OCI-LY7 (cell line): ENCODE measurements at regions of chr2 and their contacts with region 1.

Region 1: GRCh38 chr2:203656522-203657287 is 49.7 kb upstream of the CD28 start:
- DNase-seq: peak; percentile 67
- H3K4me3 ChIP-seq: no peak overlapping the region
- H3K27ac ChIP-seq: peak overlapping the region; percentile 18
- H3K4me1 ChIP-seq: peaks cover 72% of the 10 kb centered on the region
- CTCF ChIP-seq: no peak

Region 2: GRCh38 chr2:203683932-203684556 is 27.3 kb after region 1 on chr2:
- CTCF ChIA-PET with region 1: no interaction called
- POLR2A ChIA-PET with region 1: no interaction called
- intact Hi-C with region 1: loop called (anchors 2 kb)
- DNase-seq: no peak
- H3K4me3 ChIP-seq: no peak overlapping the region
- H3K27ac ChIP-seq: no peak overlapping the region
- H3K4me1 ChIP-seq: peaks cover 83% of the 10 kb centered on the region
- CTCF ChIP-seq: no peak

Region 3: GRCh38 chr2:203730076-203730729 is 73.5 kb after region 1 on chr2:
- CTCF ChIA-PET with region 1: no interaction called
- POLR2A ChIA-PET with region 1: no interaction called
- intact Hi-C with region 1: no loop called
- DNase-seq: no peak
- H3K4me3 ChIP-seq: no peak overlapping the region
- H3K27ac ChIP-seq: no peak overlapping the region
- H3K4me1 ChIP-seq: peaks cover 13% of the 10 kb centered on the region
- CTCF ChIP-seq: no peak